Posterior cingulate gyrus (tissue), 11 donors: ENCODE measurements at regions of chr5 and their contacts with region 1.

Region 1: GRCh38 chr5:119411935-119412602 is 40.2 kb upstream of the HSD17B4 start:
- DNase-seq: peak in 8 of 10 donors; percentile 8 to 88 (median 42)

Region 2: GRCh38 chr5:118987988-118988865 is 423.8 kb before region 1 on chr5 and contains the start of gene DTWD2:
- intact Hi-C with region 1: loop called (anchors 1 kb)
- DNase-seq: peak; percentile 85 to 99 (median 94)

Region 3: DNA sequence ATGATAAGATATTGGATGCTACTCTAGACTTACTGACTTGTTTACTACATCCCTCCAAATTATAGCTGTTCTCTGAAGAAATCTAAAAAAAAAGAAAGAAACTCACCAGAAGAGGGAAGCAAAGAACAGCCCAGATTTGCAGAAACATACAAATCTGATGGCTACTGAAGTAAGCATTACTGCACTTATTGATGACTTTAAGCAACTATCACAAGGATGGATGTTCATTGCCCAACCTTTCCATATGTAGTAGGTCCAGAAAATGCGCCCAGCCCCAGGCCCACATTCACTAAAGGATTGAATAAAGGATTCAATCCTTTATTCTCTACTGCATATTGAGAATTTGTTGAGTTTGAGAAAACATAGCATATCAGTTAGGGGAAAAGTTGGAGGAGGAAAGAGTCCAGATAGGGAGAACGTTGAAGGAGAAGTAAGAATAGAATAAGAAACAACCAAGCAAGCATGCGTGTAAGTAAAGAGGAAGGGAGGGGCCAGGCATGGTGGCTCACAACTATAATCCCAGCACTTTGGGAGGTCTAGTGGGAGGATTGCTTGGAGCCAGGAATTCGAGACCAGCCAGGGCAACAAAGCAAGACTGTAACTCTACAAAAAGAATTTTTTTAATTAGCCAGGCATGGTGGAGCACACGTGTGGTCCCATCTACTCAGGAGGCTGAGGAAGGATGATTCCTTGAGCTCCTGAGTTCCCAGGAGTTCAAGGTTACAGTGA is 389.9 kb before region 1 on chr5:
- intact Hi-C with region 1: loop called (anchors 1 kb)
- DNase-seq: no peak

Region 4: DNA sequence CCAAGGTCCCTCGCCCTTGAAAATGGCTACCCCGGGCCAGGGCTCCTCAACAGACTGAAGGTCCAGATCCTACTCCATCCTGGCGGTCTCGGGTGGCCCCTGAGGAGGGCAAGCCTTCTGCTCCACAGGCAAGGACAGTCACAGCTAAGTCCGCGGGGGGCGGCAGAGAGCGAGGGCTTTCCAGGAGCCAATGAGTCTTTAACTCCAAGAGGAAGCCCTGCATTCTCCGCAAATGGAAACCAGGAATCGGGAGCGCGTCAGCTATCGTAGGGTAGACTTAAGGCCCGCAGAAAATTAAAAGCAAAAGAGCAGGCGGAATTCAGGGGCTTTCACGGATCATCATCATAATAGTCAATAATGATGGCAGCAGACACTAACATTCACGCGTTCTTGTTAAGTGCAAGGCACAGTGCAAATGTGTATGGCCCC is 144.1 kb before region 1 on chr5:
- intact Hi-C with region 1: loop called (anchors 5 kb)
- DNase-seq: peak; percentile 73 to 98 (median 88)